Heart right ventricle (tissue), 16 donors: ENCODE measurements at regions of chr11 and their contacts with region 1.

Region 1: GRCh38 chr11:85854557-85855340 is 434 bp upstream of the CCDC83 start:
- DNase-seq: peak; percentile 88 to 91
- ATAC-seq: peak; percentile 98 to 99 (median 98)
- H3K4me3 ChIP-seq: peak overlapping the region; percentile 32 to 69 (median 60)
- H3K27ac ChIP-seq: peak overlapping the region; percentile 41 to 93 (median 84)
- H3K4me1 ChIP-seq: peaks cover 0 to 18% (median 8%) of the 10 kb centered on the region in 9 donors
- H3K27me3 ChIP-seq: no peaks in the 10 kb centered on the region
- CTCF ChIP-seq: peak; percentile 90 to 99 (median 97)

Region 2: GRCh38 chr11:85902353-85902752 is 47.6 kb after region 1 on chr11:
- intact Hi-C with region 1: no loop called
- DNase-seq: no peak
- ATAC-seq: no peak
- H3K4me3 ChIP-seq: no peak overlapping the region
- H3K27ac ChIP-seq: no peak overlapping the region
- H3K4me1 ChIP-seq: peaks cover 0 to 7% (median 0%) of the 10 kb centered on the region in 9 donors
- H3K27me3 ChIP-seq: no peaks in the 10 kb centered on the region
- CTCF ChIP-seq: no peak

Region 3: GRCh38 chr11:85941380-85941973 is 86.7 kb after region 1 on chr11:
- intact Hi-C with region 1: loop called in 5 of 10 experiments (anchors 5 to 10 kb)
- DNase-seq: peak; percentile 25 to 58
- ATAC-seq: peak; percentile 63 to 89 (median 80)
- H3K4me3 ChIP-seq: no peak overlapping the region
- H3K27ac ChIP-seq: no peak overlapping the region
- H3K4me1 ChIP-seq: peaks cover 1 to 22% (median 7%) of the 10 kb centered on the region in 9 donors
- H3K27me3 ChIP-seq: no peaks in the 10 kb centered on the region
- CTCF ChIP-seq: peak; percentile 41 to 87 (median 74)

Region 4: DNA sequence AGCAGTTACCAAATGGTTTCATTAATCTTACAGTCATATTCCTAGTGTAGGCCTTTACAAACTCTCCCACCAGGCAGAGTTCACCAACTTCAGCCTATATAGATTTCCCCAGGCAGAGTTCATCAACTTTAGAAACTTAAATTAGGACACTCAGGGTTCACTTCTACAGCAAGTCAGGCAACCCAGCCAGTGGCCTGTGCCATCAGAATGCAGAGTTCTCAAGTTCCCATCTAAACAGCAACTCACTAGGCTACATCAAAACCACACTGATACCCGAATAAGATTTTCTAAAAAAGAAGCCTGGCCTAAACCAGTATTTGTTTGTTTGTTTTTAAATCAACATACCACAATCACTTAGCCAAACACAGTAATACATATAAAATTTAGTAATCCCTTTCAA is 180.4 kb after region 1 on chr11:
- intact Hi-C with region 1: loop called in 1 of 10 experiments (anchors 10 kb)
- DNase-seq: no peak
- ATAC-seq: peak in 2 of 8 donors; percentile 15 to 17
- H3K4me3 ChIP-seq: no peak overlapping the region
- H3K27ac ChIP-seq: peak overlapping the region in 2 of 10 donors; percentile 9 to 35
- H3K4me1 ChIP-seq: peaks cover 0 to 94% (median 52%) of the 10 kb centered on the region in 9 donors
- H3K27me3 ChIP-seq: no peaks in the 10 kb centered on the region
- CTCF ChIP-seq: no peak

Region 5: DNA sequence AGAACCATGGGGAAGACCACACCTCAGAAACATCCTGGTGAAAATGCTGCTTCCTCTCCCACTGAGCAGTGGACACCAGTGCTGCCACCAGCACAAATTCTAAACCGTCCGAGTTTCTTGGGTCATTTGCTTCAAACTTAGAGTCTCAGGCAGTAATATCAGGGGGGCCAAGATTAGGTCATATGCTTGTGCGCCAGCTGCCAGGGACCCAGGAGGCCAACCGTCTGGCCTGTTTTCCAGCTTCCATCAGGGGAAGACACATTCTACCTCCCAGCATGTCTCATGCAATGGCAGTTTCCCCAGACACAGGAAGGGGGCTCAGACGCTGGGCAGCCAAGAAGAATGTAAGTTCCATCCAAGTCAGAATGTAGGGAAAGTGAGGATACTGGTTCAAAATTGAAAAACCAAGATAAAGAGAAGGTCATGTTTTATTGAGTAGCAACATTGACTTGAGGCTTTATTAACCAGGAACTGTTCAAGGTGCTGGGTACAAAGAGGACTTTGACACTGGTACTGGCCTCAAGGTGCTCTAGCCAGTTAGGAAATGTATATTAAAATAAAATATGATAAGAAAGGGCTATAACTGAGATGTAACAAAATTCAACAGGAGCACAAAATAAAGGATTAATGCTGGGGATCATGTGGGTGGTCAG is 330.1 kb after region 1 on chr11:
- intact Hi-C with region 1: no loop called
- DNase-seq: peak in 1 of 2 donors; percentile 19
- ATAC-seq: peak in 7 of 8 donors; percentile 5 to 66 (median 33)
- H3K4me3 ChIP-seq: no peak overlapping the region
- H3K27ac ChIP-seq: peak overlapping the region in 9 of 10 donors; percentile 10 to 74 (median 34)
- H3K4me1 ChIP-seq: peaks cover 0 to 53% (median 39%) of the 10 kb centered on the region in 9 donors
- H3K27me3 ChIP-seq: no peaks in the 10 kb centered on the region
- CTCF ChIP-seq: peak in 1 of 9 donors; percentile 4

Region 6: GRCh38 chr11:86202013-86202336 is 347.2 kb after region 1 on chr11:
- intact Hi-C with region 1: loop called in 1 of 10 experiments (anchors 10 kb)
- DNase-seq: no peak
- ATAC-seq: peak in 6 of 8 donors; percentile 22 to 53 (median 37)
- H3K4me3 ChIP-seq: peak overlapping the region in 8 of 10 donors; percentile 25 to 46 (median 43)
- H3K27ac ChIP-seq: peak overlapping the region in 6 of 10 donors; percentile 34 to 84 (median 43)
- H3K4me1 ChIP-seq: peaks cover 0 to 65% (median 6%) of the 10 kb centered on the region in 9 donors
- H3K27me3 ChIP-seq: no peaks in the 10 kb centered on the region
- CTCF ChIP-seq: no peak

Region 7: DNA sequence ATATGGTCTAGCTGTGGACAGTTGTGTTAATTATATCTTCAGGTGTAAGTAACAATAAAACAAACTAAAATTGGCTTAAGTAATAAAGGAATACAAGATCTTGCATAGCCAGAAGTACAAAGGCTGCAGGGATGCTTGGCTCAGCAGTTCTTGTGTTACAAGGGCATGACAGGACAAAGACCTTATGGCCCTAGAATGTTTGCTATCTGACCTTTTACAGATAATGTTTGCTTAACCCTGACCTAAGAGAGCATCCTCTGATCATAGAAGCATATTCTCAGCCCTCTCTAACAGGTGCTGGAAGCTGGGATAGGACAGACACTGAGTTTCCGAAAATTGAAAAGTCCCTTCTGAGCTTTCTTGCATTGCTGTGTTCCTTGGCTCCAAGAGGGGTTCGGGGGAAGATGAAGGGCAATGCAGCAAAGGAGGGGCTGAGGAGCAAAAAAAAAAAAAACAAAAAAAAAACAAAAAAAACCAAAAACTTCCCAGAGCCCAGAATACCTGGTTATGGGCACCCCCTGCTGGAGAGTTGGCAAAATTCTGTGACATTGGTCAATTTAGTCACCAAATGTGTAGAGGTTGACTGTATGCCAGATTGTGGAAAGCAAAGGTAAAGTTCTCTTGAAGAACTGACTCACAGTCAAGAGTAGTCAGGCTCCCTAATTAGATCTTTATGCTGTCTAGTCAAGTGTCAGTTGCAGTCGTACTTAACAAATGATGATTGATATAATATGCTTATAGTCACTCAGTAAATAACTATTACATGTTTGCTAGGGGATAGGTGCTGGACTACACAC is 436.9 kb after region 1 on chr11:
- intact Hi-C with region 1: loop called in 5 of 10 experiments (anchors 5 to 10 kb)
- DNase-seq: peak in 1 of 2 donors; percentile 31
- ATAC-seq: peak in 3 of 8 donors; percentile 20 to 39 (median 29)
- H3K4me3 ChIP-seq: no peak overlapping the region
- H3K27ac ChIP-seq: no peak overlapping the region
- H3K4me1 ChIP-seq: peaks cover 0 to 4% (median 0%) of the 10 kb centered on the region in 9 donors
- H3K27me3 ChIP-seq: no peaks in the 10 kb centered on the region
- CTCF ChIP-seq: peak; percentile 27 to 72 (median 64)

Region 8: GRCh38 chr11:86818466-86819192 is 963.9 kb after region 1 on chr11:
- intact Hi-C with region 1: loop called in 1 of 10 experiments (anchors 10 kb)
- DNase-seq: peak in 1 of 2 donors; percentile 20
- ATAC-seq: peak in 7 of 8 donors; percentile 35 to 63 (median 45)
- H3K4me3 ChIP-seq: no peak overlapping the region
- H3K27ac ChIP-seq: no peak overlapping the region
- H3K4me1 ChIP-seq: peaks cover 0 to 44% (median 10%) of the 10 kb centered on the region in 9 donors
- H3K27me3 ChIP-seq: no peaks in the 10 kb centered on the region
- CTCF ChIP-seq: peak; percentile 59 to 88 (median 80)